ENCODE measurements at regions of chr7 and their contacts with region 1.

Region 1: GRCh38 chr7:64183126-64183742 is 23.8 kb upstream of the ZNF735 start:
- DNase-seq: peak in 1 of 5 donors; percentile 0
- H3K4me3 ChIP-seq: no peak overlapping the region
- H3K27ac ChIP-seq: no peak overlapping the region
- H3K4me1 ChIP-seq: no peaks in the 10 kb centered on the region
- H3K27me3 ChIP-seq: no peaks in the 10 kb centered on the region
- CTCF ChIP-seq: peak; percentile 78

Region 2: DNA sequence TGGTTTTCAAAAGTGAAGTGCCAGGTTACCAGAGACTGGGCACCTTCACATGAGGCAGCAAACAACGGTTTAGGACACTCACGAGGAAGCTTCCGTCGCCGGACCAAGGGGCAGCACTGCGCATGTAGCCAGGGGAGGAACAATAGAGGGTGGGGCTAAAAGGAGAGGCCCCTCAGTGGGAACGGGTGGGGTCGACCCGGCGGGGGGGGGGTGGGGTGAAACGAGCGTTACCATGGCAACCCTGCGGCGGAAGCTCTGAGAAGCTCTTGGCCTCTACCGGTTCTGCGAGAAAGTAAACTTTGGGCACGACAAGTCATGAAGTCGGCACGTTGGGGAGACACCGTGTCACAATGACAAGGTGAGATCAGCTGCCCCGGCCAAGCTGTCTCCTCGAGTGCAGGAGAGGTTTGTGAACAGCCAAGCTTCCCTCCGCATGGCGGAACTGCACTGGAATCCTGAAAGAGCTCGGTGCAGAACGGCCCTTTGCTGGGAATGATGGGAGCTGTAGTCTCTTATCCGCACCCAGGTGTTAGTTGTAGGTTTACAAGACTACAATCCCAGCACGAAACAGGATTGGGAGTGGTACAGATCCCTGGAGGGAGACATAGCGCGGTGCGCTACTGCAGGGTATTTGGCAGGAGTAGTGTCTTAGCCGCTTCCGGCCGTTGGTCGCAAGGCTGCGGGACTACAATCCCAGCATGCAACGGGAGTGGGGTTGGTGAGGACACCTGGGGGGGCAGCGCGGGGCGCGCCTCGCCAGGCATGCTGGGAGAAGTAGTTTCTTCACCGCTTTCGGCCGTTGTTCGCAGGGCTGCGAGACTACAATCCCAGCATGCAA is 257.4 kb before region 1 on chr7:
- intact Hi-C with region 1: no loop called
- DNase-seq: peak; percentile 38 to 97 (median 45)
- H3K4me3 ChIP-seq: peak overlapping the region; percentile 58 to 92 (median 83)
- H3K27ac ChIP-seq: peak overlapping the region; percentile 92 to 97
- H3K4me1 ChIP-seq: peaks cover 0 to 5% (median 0%) of the 10 kb centered on the region in 3 donors
- H3K27me3 ChIP-seq: no peaks in the 10 kb centered on the region
- CTCF ChIP-seq: no peak

Region 3: DNA sequence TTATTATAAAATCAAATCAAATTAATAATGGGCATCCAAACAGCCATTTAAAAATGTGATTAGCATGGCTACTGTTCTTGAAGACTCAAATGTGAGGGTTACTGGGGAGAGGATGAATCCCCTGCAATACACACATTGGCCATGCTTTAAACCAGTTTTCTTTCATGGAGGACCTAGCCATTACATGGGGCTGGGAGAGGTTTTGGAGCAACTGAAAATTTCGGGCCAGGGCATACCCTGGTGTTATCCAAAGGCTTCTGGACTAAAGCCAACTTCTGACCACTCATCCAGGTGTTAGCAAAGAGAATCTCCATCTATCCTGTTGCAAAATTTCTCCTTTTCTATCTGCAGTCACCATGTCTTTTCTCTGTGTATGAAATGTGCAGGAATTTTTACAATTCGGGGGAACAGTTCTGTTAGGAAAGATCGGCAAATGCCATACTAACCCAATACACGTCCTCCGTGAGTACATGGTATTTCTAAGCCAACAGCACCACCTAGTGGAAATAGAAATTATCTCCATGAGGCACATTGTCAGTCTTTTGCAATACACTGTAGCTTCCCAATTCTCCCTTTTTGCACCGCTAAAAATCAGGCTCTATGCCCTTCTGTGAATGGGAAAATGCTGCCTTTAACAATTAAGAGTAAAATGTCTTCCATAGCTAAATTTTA is 435.7 kb after region 1 on chr7:
- intact Hi-C with region 1: loop called (anchors 5 kb)
- DNase-seq: peak in 2 of 5 donors; percentile 23 to 28
- H3K4me3 ChIP-seq: no peak overlapping the region
- H3K27ac ChIP-seq: no peak overlapping the region
- H3K4me1 ChIP-seq: no peaks in the 10 kb centered on the region
- H3K27me3 ChIP-seq: no peaks in the 10 kb centered on the region
- CTCF ChIP-seq: peak; percentile 62

Measured in kidney (tissue), 22 donors.